ENCODE measurements at regions of chr7 and their contacts with region 1.

Region 1: GRCh38 chr7:100022665-100023064 is 7.3 kb downstream of the ZKSCAN1 start:
- DNase-seq: no peak
- H3K4me3 Mint-ChIP-seq: no peak overlapping the region
- H3K27ac Mint-ChIP-seq: peak overlapping the region; percentile 87
- H3K4me1 Mint-ChIP-seq: peaks cover 67% of the 10 kb centered on the region
- H3K27me3 Mint-ChIP-seq: no peaks in the 10 kb centered on the region

Region 2: GRCh38 chr7:99504603-99505323 is 517.9 kb before region 1 on chr7 and contains the start of gene ZKSCAN5:
- CTCF ChIA-PET with region 1: no interaction called
- intact Hi-C with region 1: loop called (anchors 5 kb)
- DNase-seq: peak; percentile 98
- H3K4me3 Mint-ChIP-seq: peak within 1 kb of the TSS; percentile 87
- H3K27ac Mint-ChIP-seq: peak within 1 kb of the TSS; percentile 98
- H3K4me1 Mint-ChIP-seq: peaks cover 25% of the 10 kb centered on the region
- H3K27me3 Mint-ChIP-seq: no peaks in the 10 kb centered on the region
- total RNA-seq, gene ZKSCAN5: 7.2 to 8.0 TPM

Region 3: GRCh38 chr7:99789441-99790070 is 233.1 kb before region 1 on chr7:
- CTCF ChIA-PET with region 1: no interaction called
- intact Hi-C with region 1: loop called (anchors 10 kb)
- DNase-seq: no peak
- H3K4me3 Mint-ChIP-seq: no peak overlapping the region
- H3K27ac Mint-ChIP-seq: peak overlapping the region; percentile 72
- H3K4me1 Mint-ChIP-seq: peaks cover 37% of the 10 kb centered on the region
- H3K27me3 Mint-ChIP-seq: peaks cover 2% of the 10 kb centered on the region

Region 4: DNA sequence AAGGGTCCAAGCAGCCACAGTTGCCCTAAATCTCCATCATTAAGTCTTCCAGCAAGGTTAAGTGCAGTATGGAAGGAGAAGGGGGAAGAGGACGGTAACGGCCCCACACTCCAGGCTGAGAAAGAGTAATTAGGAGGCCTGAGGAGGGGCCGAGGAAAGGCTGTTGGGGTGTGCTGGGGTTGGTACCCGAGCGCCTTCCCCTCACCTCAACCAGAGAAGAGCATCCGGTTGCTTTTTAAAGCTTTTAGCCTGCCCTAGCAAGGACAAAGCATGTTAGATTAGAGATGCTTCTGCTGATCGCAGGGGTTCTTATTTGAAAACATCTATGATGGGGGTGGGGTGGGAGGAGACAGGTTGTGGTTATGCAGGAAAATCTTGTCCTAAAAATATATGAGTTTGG is 17.9 kb after region 1 on chr7:
- CTCF ChIA-PET with region 1: no interaction called
- intact Hi-C with region 1: loop called (anchors 1 kb)
- DNase-seq: no peak
- H3K4me3 Mint-ChIP-seq: no peak overlapping the region
- H3K27ac Mint-ChIP-seq: no peak overlapping the region
- H3K4me1 Mint-ChIP-seq: peaks cover 17% of the 10 kb centered on the region
- H3K27me3 Mint-ChIP-seq: no peaks in the 10 kb centered on the region

Region 5: DNA sequence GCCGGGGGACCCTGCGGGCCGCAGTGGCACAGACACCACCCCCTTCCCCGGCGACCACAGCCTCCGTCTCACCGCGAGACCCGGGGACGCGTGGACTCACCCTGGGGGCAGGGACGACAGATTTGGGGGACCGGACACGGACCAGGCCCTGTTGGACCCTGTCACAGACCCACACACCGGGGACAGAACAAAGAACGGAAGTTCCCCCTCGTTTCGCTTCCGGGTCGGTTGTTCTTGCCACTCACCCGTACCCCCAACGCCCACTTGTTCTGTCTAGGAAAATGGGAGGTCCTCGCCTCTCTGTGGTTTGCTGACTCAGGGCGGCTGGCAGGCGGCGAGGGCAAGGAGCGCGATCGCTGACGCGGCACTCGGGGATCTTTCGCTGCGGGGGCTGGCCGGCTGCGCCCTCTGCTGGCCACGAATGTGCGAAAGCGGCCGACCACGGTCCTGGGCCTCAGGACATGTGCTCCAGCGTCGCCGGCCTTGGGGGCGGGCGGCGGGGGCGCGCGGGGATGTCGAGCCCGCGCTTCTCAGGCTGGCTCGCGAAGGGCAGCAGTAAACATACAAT is 59.0 kb after region 1 on chr7 and contains the start of gene ZNF3:
- CTCF ChIA-PET with region 1: no interaction called
- intact Hi-C with region 1: loop called (anchors 1 kb)
- DNase-seq: peak; percentile 99
- H3K4me3 Mint-ChIP-seq: peak within 1 kb of the TSS; percentile 88
- H3K27ac Mint-ChIP-seq: peak within 1 kb of the TSS; percentile 86
- H3K4me1 Mint-ChIP-seq: peaks cover 29% of the 10 kb centered on the region
- H3K27me3 Mint-ChIP-seq: no peaks in the 10 kb centered on the region
- total RNA-seq, gene ZNF3: 13.1 to 14.0 TPM

Region 6: DNA sequence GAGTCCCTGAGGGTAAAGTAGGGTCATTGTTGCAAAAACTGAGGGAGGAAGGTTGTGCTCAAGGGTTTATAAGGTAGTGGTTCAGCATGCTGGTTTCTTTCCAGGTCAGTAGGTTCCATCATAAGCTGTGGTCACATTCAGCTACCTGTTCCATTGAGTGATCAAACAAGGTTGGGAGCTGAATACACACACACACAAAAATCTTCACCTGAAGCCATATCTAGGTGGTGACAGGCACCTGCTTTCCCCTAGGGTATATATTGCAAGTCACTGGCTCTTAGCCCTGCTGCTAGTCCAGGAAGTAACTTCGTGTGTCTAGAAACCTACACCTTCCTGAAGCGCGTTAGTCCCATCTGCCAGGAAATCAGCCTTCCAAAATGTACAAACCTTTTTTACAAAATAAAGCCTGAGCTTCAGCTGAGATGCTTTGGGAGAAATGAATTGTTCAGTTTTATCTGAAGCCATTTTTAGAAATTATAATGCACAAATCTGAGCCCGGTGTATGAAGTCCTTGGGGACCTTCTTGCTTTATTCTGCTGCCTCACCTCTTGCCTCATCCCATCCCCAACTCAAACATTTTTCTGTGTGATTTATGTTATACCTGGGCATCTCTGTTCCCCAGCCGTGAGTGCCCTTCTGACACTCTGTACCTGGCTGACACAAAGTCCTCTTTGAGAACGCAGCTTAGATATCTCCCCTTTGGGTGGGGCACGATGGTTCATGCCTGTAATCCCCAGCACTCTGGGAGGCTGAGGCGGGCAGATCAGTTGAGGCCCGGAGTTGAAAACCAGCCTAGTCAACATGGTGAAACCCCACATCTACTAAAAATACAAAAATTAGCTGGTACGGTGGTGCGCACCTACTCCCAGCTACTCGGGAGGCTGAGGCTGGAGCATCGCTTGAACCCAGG is 115.4 kb after region 1 on chr7:
- CTCF ChIA-PET with region 1: no interaction called
- intact Hi-C with region 1: no loop called
- DNase-seq: no peak
- H3K4me3 Mint-ChIP-seq: no peak overlapping the region
- H3K27ac Mint-ChIP-seq: peak overlapping the region; percentile 68
- H3K4me1 Mint-ChIP-seq: peaks cover 12% of the 10 kb centered on the region
- H3K27me3 Mint-ChIP-seq: no peaks in the 10 kb centered on the region

Region 7: DNA sequence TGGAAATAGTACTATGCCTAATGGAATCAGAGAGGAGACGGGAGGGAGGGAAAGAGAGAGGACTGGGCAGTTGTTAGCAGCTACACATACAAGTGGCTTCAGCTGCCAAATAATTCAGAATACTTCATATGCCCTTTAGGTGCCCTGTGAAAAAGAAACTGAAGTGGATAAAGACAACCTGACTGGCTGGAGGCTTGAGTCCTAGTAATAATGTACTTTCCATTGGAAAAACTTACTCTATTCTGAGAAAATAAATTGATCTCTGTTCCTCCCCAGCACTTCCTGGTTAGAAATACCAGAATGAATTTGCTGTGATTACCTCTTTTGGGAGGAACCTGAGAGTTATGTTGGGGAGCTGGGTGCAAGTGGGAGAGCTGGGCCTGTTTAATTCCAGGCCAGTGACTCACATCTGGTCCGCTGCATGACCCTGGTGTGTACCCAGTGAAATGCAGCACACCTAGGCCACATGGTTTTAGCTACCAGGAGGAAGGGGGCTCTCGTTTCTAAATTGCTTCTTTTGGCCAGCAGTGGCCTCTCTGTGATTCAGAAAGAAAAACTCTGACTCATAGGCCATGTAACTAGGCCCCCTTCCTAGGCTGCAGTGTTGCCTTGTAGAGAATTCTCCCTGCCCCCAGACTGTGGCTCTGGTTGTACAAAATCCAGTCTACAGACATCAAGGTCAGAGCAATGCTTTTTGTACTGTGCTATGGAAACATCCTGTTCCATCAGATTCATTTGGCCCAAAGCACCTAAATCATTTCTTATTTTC is 522.9 kb after region 1 on chr7:
- CTCF ChIA-PET with region 1: no interaction called
- intact Hi-C with region 1: loop called (anchors 1 kb)
- DNase-seq: peak; percentile 76
- H3K4me3 Mint-ChIP-seq: peak overlapping the region; percentile 59
- H3K27ac Mint-ChIP-seq: peak overlapping the region; percentile 95
- H3K4me1 Mint-ChIP-seq: peaks cover 94% of the 10 kb centered on the region
- H3K27me3 Mint-ChIP-seq: no peaks in the 10 kb centered on the region